Head of caudate nucleus (tissue), 42 donors: ENCODE measurements at regions of chr6 and their contacts with region 1.

Region 1: GRCh38 chr6:84065693-84066290 is 32.2 kb downstream of the MRAP2 start:
- DNase-seq: no peak

Region 2: GRCh38 chr6:83711958-83712357 is 353.8 kb before region 1 on chr6:
- intact Hi-C with region 1: no loop called
- DNase-seq: no peak

Region 3: DNA sequence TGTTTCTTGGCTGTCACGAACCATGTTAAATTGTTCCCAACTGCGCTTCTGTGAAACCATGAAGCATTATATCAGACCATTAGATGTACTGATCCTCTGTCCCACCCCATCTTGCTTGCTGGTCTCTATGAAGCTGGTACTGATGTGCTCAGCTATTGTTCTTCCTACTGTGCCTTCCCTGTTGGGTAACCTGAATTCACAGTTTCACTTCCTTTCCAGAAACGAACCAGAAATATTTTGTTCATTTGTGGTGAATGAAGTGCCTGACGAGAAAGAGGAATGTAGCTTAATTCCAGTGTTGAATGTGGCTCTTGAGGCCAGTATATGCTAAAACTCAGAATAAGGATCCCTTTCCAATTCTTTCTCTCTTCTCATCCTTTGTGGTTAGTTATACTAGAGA is 298.8 kb before region 1 on chr6:
- intact Hi-C with region 1: loop called (anchors 10 kb)
- DNase-seq: no peak